Right cardiac atrium (tissue), 5 donors: ENCODE measurements at regions of chr20 and their contacts with region 1.

Region 1: DNA sequence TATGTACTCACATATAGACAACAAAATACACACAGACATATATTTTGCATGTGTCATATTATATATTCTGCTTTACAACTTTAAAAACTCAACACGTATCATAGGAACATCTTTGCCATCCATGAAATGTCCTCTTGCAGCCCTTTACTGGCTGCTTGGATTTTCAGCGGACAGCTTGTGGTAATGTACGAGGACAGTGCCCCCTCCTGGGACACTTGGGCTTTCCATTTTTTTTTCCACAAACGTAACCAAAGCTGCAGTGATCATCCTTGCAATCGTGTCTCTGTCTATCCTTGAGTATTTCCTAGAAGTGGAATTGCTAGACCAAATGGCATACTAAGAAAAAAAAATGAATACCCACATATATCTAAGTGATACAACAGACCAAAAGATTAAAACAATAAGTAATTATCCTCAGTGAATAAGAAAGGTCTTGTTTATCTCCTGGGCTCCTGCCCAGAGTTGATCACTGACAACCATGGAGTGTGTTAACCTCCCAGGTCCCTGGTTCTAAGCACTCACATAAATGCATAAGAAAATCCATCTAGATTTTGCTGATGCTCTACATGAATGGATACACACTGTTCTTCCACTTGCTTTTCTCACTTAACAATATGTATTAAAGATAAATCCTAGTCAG is 18.1 kb downstream of the BPI start:
- DNase-seq: peak in 2 of 3 donors; percentile 53 to 76
- ATAC-seq: peak; percentile 62 to 64
- H3K4me3 ChIP-seq: no peak overlapping the region
- H3K27ac ChIP-seq: no peak overlapping the region
- H3K4me1 ChIP-seq: no peaks in the 10 kb centered on the region
- H3K27me3 ChIP-seq: no peaks in the 10 kb centered on the region

Region 2: GRCh38 chr20:37564388-37565133 is 757.5 kb before region 1 on chr20:
- intact Hi-C with region 1: loop called in 1 of 4 experiments (anchors 10 kb)
- DNase-seq: peak; percentile 18 to 75 (median 73)
- ATAC-seq: peak; percentile 47 to 79
- H3K4me3 ChIP-seq: no peak overlapping the region
- H3K27ac ChIP-seq: no peak overlapping the region
- H3K4me1 ChIP-seq: no peaks in the 10 kb centered on the region
- H3K27me3 ChIP-seq: no peaks in the 10 kb centered on the region

Region 3: DNA sequence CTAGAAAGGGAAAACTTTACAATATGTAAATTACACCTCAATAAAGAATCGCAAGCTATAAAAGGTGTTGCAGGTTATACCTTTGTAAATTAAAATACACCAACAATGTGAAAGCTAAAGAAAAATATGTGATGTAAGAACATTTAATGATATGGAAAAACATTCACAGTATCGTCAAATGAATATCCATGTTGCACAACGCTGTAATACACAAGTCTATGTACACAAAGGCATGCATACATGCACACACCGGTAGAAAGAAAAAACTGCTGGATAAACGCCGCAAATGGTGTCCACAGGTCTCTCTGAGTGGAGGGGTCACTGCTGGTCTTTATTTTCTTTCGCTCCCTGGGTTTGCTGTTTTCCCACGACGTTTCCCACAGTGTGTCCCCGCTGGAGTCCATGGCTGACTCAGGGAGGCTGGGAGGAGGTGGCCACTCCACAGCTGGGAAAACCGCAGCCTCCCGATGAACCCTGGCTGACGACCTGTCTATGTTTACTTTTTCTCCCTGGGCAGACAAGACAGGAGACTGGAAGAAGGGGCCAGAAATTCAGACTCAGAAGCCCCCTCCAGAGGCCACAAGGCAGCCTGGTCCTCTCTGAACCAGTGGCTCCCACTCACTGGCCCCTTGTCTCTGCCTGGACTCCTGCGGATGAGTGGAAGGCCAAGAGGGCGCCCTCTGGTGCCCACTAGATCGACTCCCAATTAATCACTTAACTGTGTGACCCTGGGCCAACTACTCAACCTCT is 31.1 kb before region 1 on chr20:
- intact Hi-C with region 1: no loop called
- DNase-seq: peak; percentile 78 to 88 (median 87)
- ATAC-seq: peak; percentile 75 to 91
- H3K4me3 ChIP-seq: no peak overlapping the region
- H3K27ac ChIP-seq: no peak overlapping the region
- H3K4me1 ChIP-seq: no peaks in the 10 kb centered on the region
- H3K27me3 ChIP-seq: no peaks in the 10 kb centered on the region

Region 4: GRCh38 chr20:38434743-38435554 is 112.9 kb after region 1 on chr20 and contains the start of gene SNHG17:
- intact Hi-C with region 1: no loop called
- DNase-seq: peak; percentile 92 to 97 (median 96)
- ATAC-seq: peak; percentile 87 to 88
- H3K4me3 ChIP-seq: peak within 1 kb of the TSS; percentile 86
- H3K27ac ChIP-seq: peak within 1 kb of the TSS; percentile 75
- H3K4me1 ChIP-seq: peaks cover 10% of the 10 kb centered on the region
- H3K27me3 ChIP-seq: no peaks in the 10 kb centered on the region
- total RNA-seq, gene SNHG17: 8.1 to 36.8 (median 9.4) TPM